ENCODE measurements at regions of chr10 and their contacts with region 1.

Region 1: GRCh38 chr10:71383972-71384687 is 12.6 kb upstream of the CDH23 start:
- DNase-seq: peak; percentile 54 to 80
- ATAC-seq: peak; percentile 86

Region 2: GRCh38 chr10:71156436-71156835 is 227.7 kb before region 1 on chr10:
- intact Hi-C with region 1: no loop called
- DNase-seq: no peak
- ATAC-seq: no peak

Region 3: DNA sequence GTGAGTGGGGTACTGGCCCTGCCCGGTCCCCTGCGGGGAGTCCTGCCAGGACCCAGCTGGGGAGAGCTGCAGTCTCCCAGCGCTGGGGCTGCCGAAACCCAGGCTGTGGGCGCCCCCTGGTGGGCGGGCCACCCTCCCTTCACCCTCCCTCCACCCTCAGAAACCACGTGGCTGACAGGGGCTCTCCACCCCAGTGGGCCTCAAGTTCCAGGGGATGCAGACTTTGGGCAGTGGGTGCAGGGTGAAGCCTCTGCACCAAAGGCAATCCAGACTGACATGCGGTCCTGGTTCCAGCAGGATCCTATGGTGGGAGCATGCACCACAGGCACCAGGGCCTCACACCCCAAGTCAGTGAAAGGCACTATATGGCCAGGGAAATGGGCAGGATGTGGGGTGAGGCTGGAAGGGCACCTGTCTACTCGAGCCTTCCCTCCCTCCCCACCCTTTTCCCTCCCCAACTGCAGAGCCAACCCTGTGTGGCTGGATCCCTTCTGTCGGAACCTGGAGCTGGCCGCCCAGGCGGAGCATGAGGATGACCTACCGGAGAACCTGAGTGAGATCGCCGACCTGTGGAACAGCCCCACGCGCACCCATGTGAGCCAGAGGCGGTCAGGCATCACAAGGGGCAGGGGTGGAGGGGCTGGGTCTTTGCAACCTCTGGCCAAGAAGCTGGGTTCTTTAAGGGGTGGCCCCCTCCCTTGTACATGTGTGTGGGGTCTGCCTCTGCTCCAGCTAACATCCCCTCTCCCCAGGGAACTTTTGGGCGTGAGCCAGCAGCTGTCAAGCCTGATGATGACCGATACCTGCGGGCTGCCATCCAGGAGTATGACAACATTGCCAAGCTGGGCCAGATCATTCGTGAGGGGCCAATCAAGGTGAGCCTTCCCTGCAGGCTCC is 428.1 kb after region 1 on chr10:
- intact Hi-C with region 1: loop called in 1 of 2 experiments (anchors 5 kb)
- DNase-seq: peak; percentile 53 to 82
- ATAC-seq: peak; percentile 89

Measured in left colon (tissue), 2 donors.